Psoas muscle (tissue), 8 donors: ENCODE measurements at regions of chr6 and their contacts with region 1.

Region 1: DNA sequence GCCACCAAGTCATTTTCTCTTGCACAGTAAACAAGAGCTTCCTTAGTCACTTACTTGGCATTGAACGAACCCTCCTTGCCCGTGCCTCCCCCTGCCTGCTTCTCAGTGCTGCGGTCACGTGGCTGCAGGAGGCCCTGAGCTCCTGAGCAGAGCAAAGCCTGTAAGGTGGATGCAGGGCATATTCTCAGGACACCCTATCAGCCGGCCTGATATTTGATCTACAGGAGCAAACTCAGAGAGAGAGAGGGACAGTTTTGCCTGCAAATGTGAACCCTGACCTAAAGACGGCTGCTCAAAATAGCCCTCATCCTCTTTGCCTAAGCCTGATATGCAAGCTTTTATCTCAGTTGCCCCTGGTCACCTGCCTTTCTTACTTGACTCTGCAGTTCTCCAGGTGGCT is 93.0 kb upstream of the POPDC3 start:
- DNase-seq: peak; percentile 25 to 80
- ATAC-seq: peak; percentile 73 to 87 (median 83)
- H3K4me3 ChIP-seq: no peak overlapping the region
- H3K27ac ChIP-seq: peak overlapping the region; percentile 90
- H3K4me1 ChIP-seq: peaks cover 35% of the 10 kb centered on the region
- H3K27me3 ChIP-seq: no peaks in the 10 kb centered on the region
- CTCF ChIP-seq: no peak

Region 2: GRCh38 chr6:105097288-105097687 is 175.5 kb before region 1 on chr6:
- intact Hi-C with region 1: loop called in 1 of 2 experiments (anchors 10 kb)
- DNase-seq: no peak
- ATAC-seq: no peak
- H3K4me3 ChIP-seq: no peak overlapping the region
- H3K27ac ChIP-seq: no peak overlapping the region
- H3K4me1 ChIP-seq: peaks cover 8% of the 10 kb centered on the region
- H3K27me3 ChIP-seq: no peaks in the 10 kb centered on the region
- CTCF ChIP-seq: no peak

Region 3: GRCh38 chr6:105179244-105180065 is 93.3 kb before region 1 on chr6 and contains the start of gene POPDC3:
- intact Hi-C with region 1: loop called (anchors 5 kb)
- DNase-seq: peak; percentile 39 to 77
- ATAC-seq: peak; percentile 71 to 80 (median 74)
- H3K4me3 ChIP-seq: peak within 1 kb of the TSS; percentile 87
- H3K27ac ChIP-seq: peak within 1 kb of the TSS; percentile 99
- H3K4me1 ChIP-seq: peaks cover 22% of the 10 kb centered on the region
- H3K27me3 ChIP-seq: no peaks in the 10 kb centered on the region
- CTCF ChIP-seq: no peak
- total RNA-seq, gene POPDC3: 80.1 to 170 (median 103) TPM

Region 4: GRCh38 chr6:105191351-105191750 is 81.4 kb before region 1 on chr6:
- intact Hi-C with region 1: loop called in 1 of 2 experiments (anchors 2 kb)
- DNase-seq: no peak
- ATAC-seq: no peak
- H3K4me3 ChIP-seq: no peak overlapping the region
- H3K27ac ChIP-seq: no peak overlapping the region
- H3K4me1 ChIP-seq: peaks cover 15% of the 10 kb centered on the region
- H3K27me3 ChIP-seq: no peaks in the 10 kb centered on the region
- CTCF ChIP-seq: no peak

Region 5: DNA sequence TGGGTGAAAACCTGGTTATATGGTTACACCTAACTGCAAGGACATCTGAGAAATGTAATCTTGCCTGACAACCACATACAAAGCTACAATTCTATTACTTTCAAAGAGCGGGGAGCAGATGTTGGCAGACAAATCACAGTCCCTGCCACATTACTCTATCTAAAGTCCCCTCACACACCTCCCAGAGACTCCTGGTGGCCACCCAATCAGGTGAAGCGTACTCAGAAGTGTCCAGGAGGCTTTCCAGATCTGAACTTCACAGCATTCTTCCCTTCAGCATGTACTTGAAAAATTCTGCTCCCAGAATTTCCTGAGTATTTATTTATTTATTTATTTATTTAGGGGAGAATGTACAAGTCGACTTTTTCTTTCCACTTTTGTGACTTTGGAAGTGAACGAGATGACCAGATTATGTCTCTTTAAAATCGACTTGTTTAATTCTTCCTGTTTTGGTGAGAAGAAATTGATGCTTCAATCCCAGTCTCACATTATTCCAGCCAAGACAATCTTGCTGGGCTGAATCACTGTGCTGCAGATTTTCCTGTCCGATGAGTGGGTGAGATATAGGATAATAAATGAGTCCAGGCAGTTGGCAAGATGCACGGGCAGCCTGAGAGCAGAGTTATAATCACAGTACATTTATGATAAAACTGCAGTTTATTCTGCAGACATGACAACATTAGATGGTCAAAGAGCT is 46.0 kb before region 1 on chr6:
- intact Hi-C with region 1: loop called in 1 of 2 experiments (anchors 5 kb)
- DNase-seq: no peak
- ATAC-seq: peak in 2 of 4 donors; percentile 15 to 43
- H3K4me3 ChIP-seq: no peak overlapping the region
- H3K27ac ChIP-seq: no peak overlapping the region
- H3K4me1 ChIP-seq: peaks cover 25% of the 10 kb centered on the region
- H3K27me3 ChIP-seq: no peaks in the 10 kb centered on the region
- CTCF ChIP-seq: no peak